ENCODE measurements at regions of chr5 and their contacts with region 1.

Region 1: GRCh38 chr5:151492729-151493128 is 45.3 kb downstream of the SLC36A1 start:
- DNase-seq: peak in 1 of 4 donors; percentile 56
- ATAC-seq: peak; percentile 85
- H3K4me3 ChIP-seq: no peak overlapping the region
- H3K27ac ChIP-seq: peak overlapping the region; percentile 44 to 76
- H3K4me1 ChIP-seq: peaks cover 0 to 30% of the 10 kb centered on the region in 2 donors
- H3K27me3 ChIP-seq: no peaks in the 10 kb centered on the region
- CTCF ChIP-seq: peak in 1 of 2 donors; percentile 9

Region 2: DNA sequence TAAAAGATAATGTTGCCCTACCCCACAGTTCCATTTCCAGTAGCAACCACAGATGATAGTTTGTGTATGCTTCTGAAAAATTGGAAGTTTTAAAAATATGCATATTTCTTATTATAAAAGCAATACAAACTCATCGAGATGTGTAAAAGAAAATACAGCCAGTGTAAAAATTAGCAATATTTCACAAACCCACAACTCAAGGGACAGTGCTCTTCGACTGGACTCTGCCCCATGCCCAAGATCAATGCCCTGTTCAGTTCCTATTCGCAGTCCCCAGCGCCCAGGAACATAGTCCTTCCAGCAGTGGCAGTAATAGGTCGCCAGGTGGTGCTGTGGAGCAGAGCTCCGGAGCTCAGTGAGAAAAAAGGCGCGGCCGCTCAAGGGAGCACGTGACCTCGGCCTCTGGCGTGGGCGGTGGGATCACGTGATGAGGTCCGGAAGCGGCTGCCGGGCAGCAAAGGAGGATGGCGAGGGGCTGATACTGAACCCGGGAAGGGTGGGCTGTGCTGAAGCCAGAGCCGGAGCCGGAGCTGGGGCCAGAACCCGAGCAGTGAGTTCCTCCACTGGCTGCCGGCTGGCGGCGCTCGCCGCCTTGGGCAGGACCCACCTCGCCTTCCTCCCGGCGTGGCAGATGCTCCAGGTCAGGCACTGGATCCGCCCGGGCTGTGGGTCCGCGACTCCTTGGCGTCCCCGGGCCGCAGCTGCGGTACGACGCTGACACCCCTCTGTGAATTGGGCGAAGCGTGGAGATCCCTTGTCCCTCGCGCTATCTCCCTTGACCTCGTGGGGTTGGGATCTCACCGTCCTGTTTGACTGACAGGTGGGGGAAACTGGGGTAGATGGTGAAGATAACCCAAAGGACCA is 45.3 kb before region 1 on chr5 and contains the start of gene SLC36A1:
- intact Hi-C with region 1: loop called in 1 of 2 experiments (anchors 10 kb)
- DNase-seq: peak; percentile 90 to 98 (median 94)
- ATAC-seq: peak; percentile 100
- H3K4me3 ChIP-seq: peak within 1 kb of the TSS; percentile 83 to 85
- H3K27ac ChIP-seq: peak within 1 kb of the TSS; percentile 30 to 83
- H3K4me1 ChIP-seq: peaks cover 8 to 33% of the 10 kb centered on the region in 2 donors
- H3K27me3 ChIP-seq: no peaks in the 10 kb centered on the region
- CTCF ChIP-seq: peak; percentile 82 to 97
- polyA plus RNA-seq, gene SLC36A1: 4.0 to 6.2 (median 5.0) TPM